Esophagus squamous epithelium (tissue), 5 donors: ENCODE measurements at regions of chr15 and their contacts with region 1.

Region 1: DNA sequence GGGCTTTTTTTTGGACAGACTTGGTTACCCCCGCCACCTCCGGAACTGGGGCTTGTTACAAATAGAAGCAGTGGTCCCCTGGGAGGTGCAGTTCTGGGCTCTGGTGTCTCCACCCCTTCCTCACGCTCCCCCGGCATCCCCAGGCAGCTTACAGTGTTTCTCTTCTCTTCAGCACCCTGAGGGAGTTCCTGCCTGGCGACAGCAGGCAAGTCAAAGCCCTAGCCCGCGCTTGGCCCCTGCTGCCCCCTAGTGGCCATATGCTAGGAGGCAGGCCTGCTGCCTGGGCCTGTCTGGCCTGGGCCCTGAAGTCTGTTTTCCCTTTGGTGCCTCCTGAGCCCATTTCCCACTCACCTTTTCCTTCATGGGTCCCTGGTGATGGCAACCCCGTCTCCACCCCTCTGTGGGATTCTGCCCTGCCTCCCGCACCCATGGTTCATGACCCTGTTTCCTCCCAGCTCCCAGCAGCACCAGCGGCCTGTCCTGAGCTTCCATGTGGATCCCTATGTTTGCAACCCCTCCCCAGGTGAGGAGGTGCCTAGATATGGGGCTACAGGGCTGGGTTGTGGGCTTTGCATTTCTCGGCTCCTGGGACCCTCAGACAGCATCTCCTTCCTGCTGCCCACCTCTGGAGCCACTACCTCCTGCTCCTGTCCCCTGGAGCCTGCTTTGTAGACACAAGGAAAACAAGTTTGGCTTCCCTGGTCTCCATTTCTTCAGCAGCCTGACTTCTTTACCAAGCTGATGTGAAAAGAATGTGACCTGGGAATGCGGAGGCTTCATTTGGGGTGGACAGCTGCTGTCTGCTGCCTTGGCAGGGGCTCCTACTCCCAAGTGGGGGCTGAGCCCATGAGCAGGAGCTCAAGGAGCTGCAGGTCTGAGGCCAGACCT is 2.2 kb downstream of the SNX22 start:
- DNase-seq: peak; percentile 67
- H3K4me3 ChIP-seq: peak overlapping the region in 1 of 4 donors; percentile 21
- H3K27ac ChIP-seq: peak overlapping the region in 3 of 4 donors; percentile 16 to 39 (median 23)
- H3K4me1 ChIP-seq: peaks cover 17 to 44% (median 27%) of the 10 kb centered on the region in 3 donors
- H3K27me3 ChIP-seq: peaks cover 0 to 28% (median 6%) of the 10 kb centered on the region in 4 donors
- CTCF ChIP-seq: peak; percentile 90 to 99 (median 94)
- POLR2A ChIP-seq: no peak

Region 2: DNA sequence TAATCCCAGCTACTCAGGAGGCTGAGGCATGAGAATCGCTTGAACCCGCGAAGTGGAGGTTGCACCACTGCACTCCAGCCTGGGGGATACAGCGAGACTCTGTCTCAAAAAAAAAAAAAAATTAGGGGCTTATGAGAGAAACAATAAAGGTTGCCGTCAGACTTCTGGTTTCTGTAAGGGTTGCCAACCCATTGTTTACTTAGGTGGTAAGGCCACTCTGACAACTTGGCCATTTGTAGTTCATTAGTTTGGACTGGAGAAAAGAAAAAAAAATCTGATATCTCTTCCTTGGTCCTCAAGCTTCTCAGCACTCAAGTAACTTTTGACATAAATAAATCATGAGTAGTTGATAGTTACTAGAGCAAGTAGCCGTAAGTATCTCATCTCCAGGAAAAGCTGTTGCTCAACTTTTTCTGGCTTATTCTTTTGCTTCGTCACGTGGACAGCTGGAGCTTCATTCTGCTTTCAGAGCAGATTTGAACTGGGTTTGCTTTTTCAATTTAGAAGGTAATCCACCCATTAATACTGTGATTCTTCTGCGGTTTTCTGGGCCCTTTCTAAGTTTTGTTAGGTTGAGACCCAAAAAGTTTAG is 48.5 kb before region 1 on chr15:
- intact Hi-C with region 1: loop called (anchors 10 kb)
- DNase-seq: no peak
- H3K4me3 ChIP-seq: no peak overlapping the region
- H3K27ac ChIP-seq: peak overlapping the region in 3 of 4 donors; percentile 30 to 45 (median 38)
- H3K4me1 ChIP-seq: peaks cover 7 to 54% (median 13%) of the 10 kb centered on the region in 3 donors
- H3K27me3 ChIP-seq: no peaks in the 10 kb centered on the region
- CTCF ChIP-seq: no peak
- POLR2A ChIP-seq: no peak

Region 3: DNA sequence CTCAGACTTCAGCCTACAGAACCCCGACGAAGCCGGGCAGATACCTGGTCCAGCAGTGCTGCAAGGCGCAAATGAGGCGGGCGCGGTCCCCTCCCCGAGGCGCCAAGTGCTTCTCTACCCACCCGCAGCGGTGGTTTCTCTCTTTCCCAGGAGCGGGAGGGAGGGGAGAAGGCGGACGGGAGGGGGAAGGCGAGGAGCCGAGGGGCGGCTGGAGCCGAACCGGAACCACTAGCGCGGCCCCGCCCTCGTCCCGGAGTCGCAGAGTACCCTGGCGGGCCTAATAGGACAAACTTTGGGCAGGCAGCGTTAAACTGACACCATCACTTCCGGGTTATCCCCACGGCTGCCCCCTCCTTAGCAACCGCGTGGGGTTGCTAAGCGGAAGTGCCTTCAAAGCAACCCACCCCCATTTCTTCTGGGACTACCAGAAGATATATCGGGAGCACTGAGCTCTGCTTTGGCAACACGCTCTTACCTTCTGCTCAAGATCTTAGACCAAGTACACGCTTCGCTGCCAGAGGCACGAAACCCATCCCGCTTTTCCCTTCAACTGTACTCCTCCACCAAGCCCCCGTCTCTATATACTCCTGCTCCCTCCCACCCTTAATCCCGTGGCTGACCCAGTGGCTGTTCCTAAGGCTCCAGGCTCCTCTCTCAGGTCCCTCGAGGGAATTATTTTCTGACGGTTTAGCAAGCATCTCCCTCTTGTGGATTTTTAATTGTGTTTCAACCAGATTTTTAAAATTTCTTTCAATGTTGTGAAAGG is 202.4 kb after region 1 on chr15 and contains the start of gene CSNK1G1:
- intact Hi-C with region 1: loop called (anchors 10 kb)
- DNase-seq: peak; percentile 57
- H3K4me3 ChIP-seq: peak within 1 kb of the TSS; percentile 68 to 80 (median 72)
- H3K27ac ChIP-seq: peak within 1 kb of the TSS; percentile 79 to 89 (median 81)
- H3K4me1 ChIP-seq: peaks cover 3 to 30% (median 11%) of the 10 kb centered on the region in 3 donors
- H3K27me3 ChIP-seq: no peaks in the 10 kb centered on the region
- CTCF ChIP-seq: peak; percentile 10 to 57 (median 44)
- POLR2A ChIP-seq: peak in 1 of 4 donors; percentile 27
- total RNA-seq, gene CSNK1G1: 15.0 to 21.4 (median 16.8) TPM